ENCODE measurements at regions of chr7 and their contacts with region 1.

Region 1: GRCh38 chr7:44565097-44565794 is 8.5 kb downstream of the DDX56 start:
- DNase-seq: peak; percentile 82

Region 2: GRCh38 chr7:44547536-44548231 is 17.6 kb before region 1 on chr7:
- CTCF ChIA-PET with region 1: interaction called, 10 read pairs
- POLR2A ChIA-PET with region 1: interaction called, 3 read pairs
- DNase-seq: no peak

Region 3: DNA sequence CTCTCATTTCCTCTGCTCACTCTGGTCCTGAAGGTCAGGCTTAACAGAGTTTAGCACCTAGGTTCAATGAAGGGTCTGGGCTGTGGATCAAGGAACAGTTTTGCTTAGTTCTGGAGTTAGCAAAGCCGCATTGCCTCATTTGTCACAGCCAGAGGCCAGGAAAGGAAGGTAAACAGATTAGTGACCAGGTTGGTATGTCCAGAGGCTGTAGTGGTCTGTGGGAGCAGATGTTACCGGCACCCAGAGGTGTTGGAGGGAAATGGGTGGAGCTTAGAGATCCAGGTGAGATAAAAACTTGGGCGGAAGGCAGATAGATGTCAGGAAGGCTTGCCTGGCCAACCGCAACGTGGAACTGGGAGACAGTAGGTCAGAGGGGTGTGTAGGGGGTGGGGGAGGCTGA is 146.8 kb after region 1 on chr7:
- CTCF ChIA-PET with region 1: no interaction called
- POLR2A ChIA-PET with region 1: no interaction called
- DNase-seq: peak; percentile 5